ENCODE measurements at regions of chr16 and their contacts with region 1.

Region 1: GRCh38 chr16:4811236-4811635 is 8.8 kb upstream of the ROGDI start:
- DNase-seq: no peak
- ATAC-seq: no peak
- H3K4me3 ChIP-seq: no peak overlapping the region
- H3K4me3 Mint-ChIP-seq: no peak overlapping the region
- H3K27ac ChIP-seq: no peak overlapping the region
- H3K27ac Mint-ChIP-seq: peak overlapping the region in 1 of 2 donors; percentile 17
- H3K4me1 ChIP-seq: no peaks in the 10 kb centered on the region
- H3K4me1 Mint-ChIP-seq: no peaks in the 10 kb centered on the region
- H3K27me3 ChIP-seq: no peaks in the 10 kb centered on the region
- H3K27me3 Mint-ChIP-seq: no peaks in the 10 kb centered on the region

Region 2: GRCh38 chr16:4664538-4665418 is 146.5 kb before region 1 on chr16:
- CTCF ChIA-PET with region 1: no interaction called
- POLR2A ChIA-PET with region 1: interaction called in 1 of 2 experiments, 10 read pairs
- DNase-seq: peak in 34 of 35 experiments; percentile 36 to 75 (median 56)
- ATAC-seq: peak; percentile 70 to 86 (median 84)
- H3K4me3 ChIP-seq: peak overlapping the region in 1 of 2 donors; percentile 28
- H3K4me3 Mint-ChIP-seq: peak overlapping the region; percentile 50 to 72 (median 62)
- H3K27ac ChIP-seq: peak overlapping the region; percentile 82
- H3K27ac Mint-ChIP-seq: peak overlapping the region; percentile 95 to 98
- H3K4me1 ChIP-seq: peaks cover 24 to 72% of the 10 kb centered on the region in 2 experiments
- H3K4me1 Mint-ChIP-seq: peaks cover 51 to 67% (median 65%) of the 10 kb centered on the region in 3 donors
- H3K27me3 ChIP-seq: no peaks in the 10 kb centered on the region
- H3K27me3 Mint-ChIP-seq: no peaks in the 10 kb centered on the region

Region 3: DNA sequence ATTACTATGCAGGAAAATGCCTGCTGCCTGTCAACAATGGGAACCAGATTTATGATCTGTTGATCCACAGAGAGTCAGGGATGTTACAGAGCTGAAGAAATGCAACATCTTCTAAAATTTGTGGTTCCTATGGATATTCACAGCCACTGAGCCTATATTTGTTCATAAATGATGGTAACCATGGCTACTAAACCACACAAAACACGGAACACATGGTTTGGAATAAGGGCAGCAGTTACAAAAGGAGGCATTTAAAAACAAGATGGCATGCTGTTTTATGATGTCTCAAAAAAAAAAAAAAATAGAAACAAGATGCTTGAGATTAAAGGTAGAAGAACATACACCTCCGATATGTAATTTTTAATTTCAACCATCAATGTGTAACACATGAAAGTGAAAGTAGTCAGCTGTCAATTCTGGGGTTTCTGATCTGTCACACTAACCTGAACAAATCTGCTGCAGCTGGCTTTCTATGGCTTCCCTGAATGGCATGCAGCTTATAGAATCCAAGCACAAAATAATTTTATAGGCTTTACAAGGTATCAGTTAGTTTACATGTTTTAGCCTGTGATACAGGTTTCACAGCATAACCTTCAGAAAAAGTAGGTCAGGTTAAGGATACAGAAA is 22.2 kb after region 1 on chr16:
- CTCF ChIA-PET with region 1: no interaction called
- POLR2A ChIA-PET with region 1: no interaction called
- DNase-seq: no peak
- ATAC-seq: no peak
- H3K4me3 ChIP-seq: no peak overlapping the region
- H3K4me3 Mint-ChIP-seq: no peak overlapping the region
- H3K27ac ChIP-seq: no peak overlapping the region
- H3K27ac Mint-ChIP-seq: no peak overlapping the region
- H3K4me1 ChIP-seq: no peaks in the 10 kb centered on the region
- H3K4me1 Mint-ChIP-seq: peaks cover 16 to 20% (median 19%) of the 10 kb centered on the region in 3 donors
- H3K27me3 ChIP-seq: no peaks in the 10 kb centered on the region
- H3K27me3 Mint-ChIP-seq: no peaks in the 10 kb centered on the region

Region 4: GRCh38 chr16:4846891-4847773 is 35.9 kb after region 1 on chr16 and contains the starts of genes GLYR1 and UBN1:
- CTCF ChIA-PET with region 1: no interaction called
- POLR2A ChIA-PET with region 1: interaction called in 1 of 2 experiments, 14 read pairs
- DNase-seq: peak; percentile 96 to 100 (median 99)
- ATAC-seq: peak; percentile 90 to 93 (median 92)
- H3K4me3 ChIP-seq: peak within 1 kb of the TSS; percentile 88 to 94
- H3K4me3 Mint-ChIP-seq: peak within 1 kb of the TSS; percentile 88 to 91 (median 88)
- H3K27ac ChIP-seq: peak within 1 kb of the TSS; percentile 64
- H3K27ac Mint-ChIP-seq: peak within 1 kb of the TSS; percentile 86 to 88
- H3K4me1 ChIP-seq: peaks cover 26 to 36% of the 10 kb centered on the region in 2 experiments
- H3K4me1 Mint-ChIP-seq: peaks cover 54 to 61% (median 60%) of the 10 kb centered on the region in 3 donors
- H3K27me3 ChIP-seq: no peaks in the 10 kb centered on the region
- H3K27me3 Mint-ChIP-seq: no peaks in the 10 kb centered on the region
- total RNA-seq, gene GLYR1: 95.5 to 106 (median 102) TPM
- total RNA-seq, gene UBN1: 41.8 to 53.7 (median 48.2) TPM